GM23248 (cell line): ENCODE measurements at regions of chr1 and their contacts with region 1.

Region 1: GRCh38 chr1:165914136-165914798 is 86.9 kb downstream of the UCK2 start:
- DNase-seq: peak; percentile 86
- H3K4me3 ChIP-seq: no peak overlapping the region
- H3K27ac ChIP-seq: peak overlapping the region; percentile 38; the same call in 1 of the 2 replicates
- H3K4me1 ChIP-seq: peaks cover 16% of the 10 kb centered on the region
- H3K27me3 ChIP-seq: no peaks in the 10 kb centered on the region

Region 2: GRCh38 chr1:165392634-165393571 is 521.4 kb before region 1 on chr1:
- in situ Hi-C with region 1: loop called (anchors 10 kb)
- DNase-seq: peak; percentile 95
- H3K4me3 ChIP-seq: peak overlapping the region; percentile 20
- H3K27ac ChIP-seq: no peak overlapping the region
- H3K4me1 ChIP-seq: peaks cover 16% of the 10 kb centered on the region
- H3K27me3 ChIP-seq: peaks cover 48% of the 10 kb centered on the region

Region 3: DNA sequence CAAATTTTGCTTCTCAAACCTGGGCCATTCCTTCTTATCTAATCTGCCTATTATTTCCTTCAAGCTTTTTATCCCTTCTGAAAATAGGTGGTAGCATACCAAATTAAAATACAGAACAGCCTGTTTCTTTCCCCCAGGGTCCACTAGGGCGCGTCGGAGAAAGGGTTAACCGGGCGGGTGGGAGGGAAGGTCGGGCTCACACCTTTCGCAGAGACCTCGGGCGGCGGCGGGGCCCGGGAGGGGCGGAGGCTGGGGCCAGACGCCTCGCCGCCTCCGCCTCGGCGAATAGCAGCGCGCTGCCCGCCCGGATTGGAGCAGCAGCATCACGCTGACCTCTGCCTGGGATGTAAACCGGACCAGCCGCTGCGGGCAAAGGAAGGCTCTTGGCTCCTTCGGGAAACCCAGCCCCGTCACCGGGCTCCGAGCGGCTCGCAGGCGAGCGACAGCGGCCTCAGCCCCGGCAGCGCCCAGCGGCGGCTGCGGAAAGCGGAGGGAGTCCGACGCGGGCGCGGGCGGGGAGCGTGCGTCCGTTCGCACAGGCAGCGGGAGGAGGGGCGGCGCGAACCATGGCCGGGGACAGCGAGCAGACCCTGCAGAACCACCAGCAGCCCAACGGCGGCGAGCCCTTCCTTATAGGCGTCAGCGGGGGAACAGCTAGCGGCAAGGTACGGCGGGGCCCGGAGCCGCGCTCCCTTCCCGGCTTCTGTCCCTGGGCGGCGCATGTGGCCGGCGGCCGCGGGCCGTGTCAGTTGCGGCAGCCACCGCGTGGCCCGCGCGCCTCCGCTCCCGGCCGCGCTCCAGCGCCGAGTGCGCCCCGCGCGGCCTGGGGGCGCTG is 86.8 kb before region 1 on chr1 and contains the start of gene UCK2:
- in situ Hi-C with region 1: no loop called
- DNase-seq: peak; percentile 94
- H3K4me3 ChIP-seq: peak within 1 kb of the TSS; percentile 82
- H3K27ac ChIP-seq: peak within 1 kb of the TSS; percentile 82
- H3K4me1 ChIP-seq: peaks cover 9% of the 10 kb centered on the region
- H3K27me3 ChIP-seq: no peaks in the 10 kb centered on the region
- total RNA-seq, gene UCK2: 75.4 and 81.9 TPM in 2 replicates

Region 4: GRCh38 chr1:166289309-166290050 is 375.2 kb after region 1 on chr1:
- in situ Hi-C with region 1: no loop called
- DNase-seq: no peak
- H3K4me3 ChIP-seq: no peak overlapping the region
- H3K27ac ChIP-seq: no peak overlapping the region
- H3K4me1 ChIP-seq: no peaks in the 10 kb centered on the region
- H3K27me3 ChIP-seq: no peaks in the 10 kb centered on the region